GM23248 (cell line): ENCODE measurements at regions of chr1 and their contacts with region 1.

Region 1: DNA sequence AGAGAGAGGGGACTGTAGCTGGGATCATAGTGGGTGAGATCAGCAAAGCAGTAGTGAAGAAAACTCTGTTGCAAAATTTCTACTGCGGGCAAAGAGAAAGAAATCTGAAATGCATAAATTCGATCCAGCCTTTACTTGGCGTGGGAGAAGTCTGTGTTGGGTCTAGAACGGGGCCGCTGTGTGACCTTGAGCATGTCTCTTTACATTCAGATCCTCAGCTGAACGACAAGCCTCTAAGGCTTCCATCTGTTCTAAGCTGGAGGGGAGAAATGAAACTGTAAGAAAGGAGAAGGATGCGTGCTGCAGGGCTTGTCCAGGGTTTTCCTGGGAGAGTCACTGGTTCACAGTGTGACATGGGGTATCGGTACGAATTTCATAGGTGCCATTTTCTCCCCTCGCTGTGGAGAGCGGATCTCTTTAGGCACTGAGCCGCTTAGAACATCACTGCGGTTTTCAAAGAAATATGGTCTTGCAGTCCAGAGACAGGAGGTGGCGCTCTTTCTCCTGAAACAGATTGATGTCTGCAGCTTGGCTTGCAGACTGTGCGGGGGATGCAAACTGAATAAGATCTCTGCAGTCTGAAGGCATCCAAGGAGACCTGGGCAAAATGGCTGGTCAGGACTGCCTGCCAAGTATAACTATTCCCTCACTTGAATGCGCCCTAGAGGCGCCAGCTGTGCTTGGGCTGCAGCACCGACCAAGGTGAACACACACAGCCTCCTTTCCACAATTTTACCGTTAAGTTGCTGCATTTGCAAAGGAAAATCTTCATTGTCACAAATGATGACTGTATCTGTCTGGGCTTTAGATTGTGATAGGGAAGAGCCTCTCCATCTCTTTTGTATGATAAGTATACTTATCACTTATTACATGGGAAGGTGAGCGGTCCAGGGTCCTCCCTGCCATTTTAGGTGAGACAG is 104.1 kb downstream of the XCL2 start:
- DNase-seq: peak; percentile 94
- H3K4me3 ChIP-seq: peak overlapping the region; percentile 69
- H3K27ac ChIP-seq: no peak overlapping the region
- H3K4me1 ChIP-seq: peaks cover 15% of the 10 kb centered on the region
- H3K27me3 ChIP-seq: no peaks in the 10 kb centered on the region

Region 2: DNA sequence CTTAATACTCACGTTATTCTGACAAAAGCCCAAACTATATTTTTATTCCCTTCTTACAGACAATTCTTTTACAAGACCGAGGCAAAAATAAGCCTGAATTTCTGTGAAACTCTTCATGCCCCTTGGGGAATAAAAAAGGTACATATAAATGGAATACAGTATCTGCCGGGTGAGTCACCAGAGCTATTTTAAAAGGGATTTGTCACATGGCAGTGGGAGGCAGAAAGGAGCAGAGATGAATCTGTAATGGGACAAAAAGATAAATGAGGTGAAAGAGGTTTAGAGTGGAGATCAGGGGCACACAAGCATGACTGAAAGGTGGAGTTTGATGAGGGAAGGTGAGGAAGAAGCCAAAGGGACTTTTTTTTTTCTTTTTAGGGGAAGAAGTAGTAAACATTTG is 145.5 kb after region 1 on chr1:
- in situ Hi-C with region 1: loop called (anchors 10 kb)
- DNase-seq: peak; percentile 87
- H3K4me3 ChIP-seq: 0 out of 2 replicates have a peak overlapping the region, but pooled peaks have one; percentile 6
- H3K27ac ChIP-seq: no peak overlapping the region
- H3K4me1 ChIP-seq: peaks cover 33% of the 10 kb centered on the region
- H3K27me3 ChIP-seq: no peaks in the 10 kb centered on the region

Region 3: GRCh38 chr1:168709405-168710305 is 269.9 kb after region 1 on chr1:
- in situ Hi-C with region 1: loop called (anchors 25 kb)
- DNase-seq: peak; percentile 98
- H3K4me3 ChIP-seq: peak overlapping the region; percentile 47; the same call in 1 of the 2 replicates
- H3K27ac ChIP-seq: peak overlapping the region; percentile 98
- H3K4me1 ChIP-seq: peaks cover 29% of the 10 kb centered on the region
- H3K27me3 ChIP-seq: no peaks in the 10 kb centered on the region

Region 4: DNA sequence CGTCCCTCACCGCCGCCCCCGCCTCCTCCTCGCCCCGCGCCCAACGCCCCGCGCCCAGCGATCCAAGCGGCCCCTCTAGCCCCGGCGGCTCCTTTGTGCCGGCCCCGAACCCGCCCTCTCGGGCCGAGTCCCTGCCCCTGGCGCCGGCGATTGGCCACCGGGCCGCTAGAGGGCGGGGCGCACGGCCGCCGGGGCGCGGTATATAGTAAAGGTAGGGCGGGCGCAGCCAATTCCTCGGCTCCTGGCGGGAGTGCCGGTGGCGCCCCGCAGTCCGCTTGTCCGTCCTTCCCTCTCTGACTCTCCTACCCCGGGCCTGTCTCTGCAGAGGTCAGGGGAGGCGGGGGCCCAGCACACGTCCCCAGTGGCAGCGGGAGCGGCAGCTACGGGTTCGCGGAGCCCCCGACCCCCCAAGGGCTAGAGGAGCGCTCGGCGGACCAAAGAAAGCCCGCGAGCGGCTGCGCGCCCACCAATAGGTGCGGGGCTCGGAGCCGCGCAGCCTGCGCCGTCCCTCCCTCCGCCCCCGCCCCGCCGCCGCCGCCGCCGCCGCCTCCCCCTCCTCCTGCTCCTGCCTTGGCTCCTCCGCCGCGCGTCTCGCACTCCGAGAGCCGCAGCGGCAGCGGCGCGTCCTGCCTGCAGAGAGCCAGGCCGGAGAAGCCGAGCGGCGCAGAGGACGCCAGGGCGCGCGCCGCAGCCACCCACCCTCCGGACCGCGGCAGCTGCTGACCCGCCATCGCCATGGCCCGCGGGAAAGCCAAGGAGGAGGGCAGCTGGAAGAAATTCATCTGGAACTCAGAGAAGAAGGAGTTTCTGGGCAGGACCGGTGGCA is 666.6 kb after region 1 on chr1 and contains the start of gene ATP1B1:
- in situ Hi-C with region 1: loop called (anchors 25 kb)
- DNase-seq: peak; percentile 92
- H3K4me3 ChIP-seq: peak within 1 kb of the TSS; percentile 94
- H3K27ac ChIP-seq: peak within 1 kb of the TSS; percentile 11; the same call in 1 of the 2 replicates
- H3K4me1 ChIP-seq: peaks cover 33% of the 10 kb centered on the region
- H3K27me3 ChIP-seq: 0 out of 2 replicates have a peak, but pooled peaks cover 4% of the 10 kb centered on the region
- total RNA-seq, gene ATP1B1: 6.9 and 9.4 TPM in 2 replicates

Region 5: GRCh38 chr1:169367486-169368405 is 928.0 kb after region 1 on chr1 and contains the starts of genes BLZF1 and NME7:
- in situ Hi-C with region 1: loop called (anchors 25 kb)
- DNase-seq: peak; percentile 99
- H3K4me3 ChIP-seq: peak within 1 kb of the TSS; percentile 82
- H3K27ac ChIP-seq: peak within 1 kb of the TSS; percentile 90
- H3K4me1 ChIP-seq: peaks cover 32% of the 10 kb centered on the region
- H3K27me3 ChIP-seq: no peaks in the 10 kb centered on the region
- total RNA-seq, gene BLZF1: 33.0 and 34.6 TPM in 2 replicates
- total RNA-seq, gene NME7: 22.3 and 28.2 TPM in 2 replicates